ENCODE measurements at regions of chr20 and their contacts with region 1.

Region 1: GRCh38 chr20:20593447-20594170 is 118.8 kb downstream of the RALGAPA2 start:
- DNase-seq: no peak
- H3K4me3 ChIP-seq: no peak overlapping the region
- CTCF ChIP-seq: no peak
- POLR2A ChIP-seq: no peak

Region 2: GRCh38 chr20:20658871-20659431 is 65.3 kb after region 1 on chr20:
- intact Hi-C with region 1: loop called (anchors 10 kb)
- DNase-seq: no peak
- H3K4me3 ChIP-seq: no peak overlapping the region
- CTCF ChIP-seq: no peak
- POLR2A ChIP-seq: no peak

Region 3: DNA sequence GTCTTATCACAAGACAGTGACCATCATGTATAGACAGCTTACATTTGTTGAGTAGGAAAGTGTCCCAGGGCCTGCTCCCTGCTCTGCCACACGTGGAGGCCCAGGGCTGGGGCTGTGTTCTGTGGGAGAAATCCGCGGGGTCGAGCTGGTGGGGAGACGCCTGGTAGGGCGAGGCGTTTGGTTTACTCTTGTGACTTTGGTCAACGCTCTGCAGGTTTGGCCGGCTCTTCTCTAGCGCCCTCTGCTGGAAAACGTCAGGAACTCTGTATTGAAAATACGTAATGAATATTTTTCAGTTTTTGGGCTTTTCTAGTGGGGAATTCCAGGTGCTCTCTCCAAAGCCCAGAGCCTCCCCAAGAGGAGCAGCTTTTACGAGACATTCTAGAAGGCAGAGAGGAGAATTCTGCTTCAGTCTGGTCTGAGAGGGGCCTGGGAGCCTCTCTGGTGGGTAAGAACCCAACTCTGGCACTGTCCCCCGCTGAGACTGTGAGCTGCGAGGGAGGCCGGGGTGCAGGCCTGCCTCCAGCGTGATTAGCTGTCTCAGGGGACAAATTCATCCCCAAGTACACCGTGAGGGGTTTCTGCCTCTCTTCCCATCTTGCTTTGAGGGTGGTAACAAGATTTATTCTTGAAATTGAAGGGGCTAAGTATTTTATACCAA is 231.4 kb after region 1 on chr20:
- intact Hi-C with region 1: loop called (anchors 10 kb)
- DNase-seq: peak in 1 of 2 donors; percentile 88
- H3K4me3 ChIP-seq: no peak overlapping the region
- CTCF ChIP-seq: peak in 1 of 3 donors; percentile 47
- POLR2A ChIP-seq: no peak